ENCODE measurements at regions of chr3 and their contacts with region 1.

Region 1: GRCh38 chr3:142993958-142994442 is 7.4 kb upstream of the U2SURP start:
- DNase-seq: no peak
- H3K4me3 ChIP-seq: no peak overlapping the region
- H3K27ac ChIP-seq: no peak overlapping the region
- H3K4me1 ChIP-seq: no peaks in the 10 kb centered on the region
- H3K27me3 ChIP-seq: no peaks in the 10 kb centered on the region
- CTCF ChIP-seq: peak; percentile 19 to 53 (median 26)
- EP300 ChIP-seq: no peak
- POLR2A ChIP-seq: no peak

Region 2: GRCh38 chr3:142586803-142587406 is 407.1 kb before region 1 on chr3:
- intact Hi-C with region 1: loop called (anchors 5 kb)
- DNase-seq: no peak
- H3K4me3 ChIP-seq: no peak overlapping the region
- H3K27ac ChIP-seq: no peak overlapping the region
- H3K4me1 ChIP-seq: peaks cover 0 to 3% (median 0%) of the 10 kb centered on the region in 4 donors
- H3K27me3 ChIP-seq: no peaks in the 10 kb centered on the region
- CTCF ChIP-seq: peak; percentile 7 to 57 (median 48)
- EP300 ChIP-seq: no peak
- POLR2A ChIP-seq: no peak

Region 3: DNA sequence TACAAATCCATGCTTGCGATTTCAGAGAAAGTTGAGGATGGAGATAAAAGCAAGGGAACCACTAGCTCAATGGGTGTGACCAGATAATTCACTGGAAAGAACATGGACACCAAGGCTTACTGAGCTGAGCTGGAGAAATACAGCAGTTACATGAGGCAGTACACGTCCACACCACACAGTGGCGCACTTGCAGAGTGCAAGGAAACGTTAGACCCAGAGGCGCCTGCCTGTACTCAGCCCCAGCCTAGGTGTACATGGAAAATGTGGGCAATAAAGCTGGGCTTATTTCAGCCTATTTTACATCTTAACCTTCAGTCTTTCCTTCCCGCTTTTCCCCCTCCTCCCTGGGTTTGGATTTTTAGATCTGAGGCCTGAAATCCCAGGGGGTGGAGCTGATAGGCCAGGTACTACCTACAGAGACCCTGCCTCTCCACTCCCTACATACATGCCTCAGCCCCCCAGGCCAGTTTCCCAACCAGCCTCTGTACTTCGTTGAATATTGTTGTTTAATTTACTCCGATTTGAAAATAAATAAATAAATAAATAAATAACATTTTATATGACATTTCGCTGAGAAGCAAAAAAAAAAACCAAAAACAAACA is 165.2 kb before region 1 on chr3:
- intact Hi-C with region 1: loop called (anchors 5 kb)
- DNase-seq: peak; percentile 85
- H3K4me3 ChIP-seq: no peak overlapping the region
- H3K27ac ChIP-seq: no peak overlapping the region
- H3K4me1 ChIP-seq: no peaks in the 10 kb centered on the region
- H3K27me3 ChIP-seq: no peaks in the 10 kb centered on the region
- CTCF ChIP-seq: peak; percentile 19 to 74 (median 72)
- EP300 ChIP-seq: no peak
- POLR2A ChIP-seq: no peak

Region 4: DNA sequence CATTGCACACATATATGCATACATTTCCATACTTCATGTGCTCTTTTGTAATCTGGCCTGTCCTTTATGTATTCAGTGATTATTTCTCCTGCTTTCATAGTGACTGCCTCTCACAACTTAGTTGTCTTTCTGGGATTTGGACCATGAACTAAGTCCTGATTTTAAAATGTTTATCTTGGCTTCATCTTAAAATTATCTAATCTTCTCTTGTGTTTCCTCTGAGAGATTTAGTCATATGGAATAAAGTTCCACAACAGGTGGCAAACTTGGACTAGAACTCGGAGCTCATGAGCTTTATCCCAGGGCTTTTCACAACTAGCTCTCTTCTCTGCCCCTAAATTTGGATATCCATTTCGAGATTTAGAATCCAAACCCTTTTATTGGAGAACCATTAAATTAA is 51.6 kb after region 1 on chr3:
- intact Hi-C with region 1: no loop called
- DNase-seq: no peak
- H3K4me3 ChIP-seq: no peak overlapping the region
- H3K27ac ChIP-seq: no peak overlapping the region
- H3K4me1 ChIP-seq: no peaks in the 10 kb centered on the region
- H3K27me3 ChIP-seq: no peaks in the 10 kb centered on the region
- CTCF ChIP-seq: no peak
- EP300 ChIP-seq: no peak
- POLR2A ChIP-seq: no peak

Measured in sigmoid colon (tissue), 7 donors.